ENCODE measurements at regions of chr11 and their contacts with region 1.

Region 1: DNA sequence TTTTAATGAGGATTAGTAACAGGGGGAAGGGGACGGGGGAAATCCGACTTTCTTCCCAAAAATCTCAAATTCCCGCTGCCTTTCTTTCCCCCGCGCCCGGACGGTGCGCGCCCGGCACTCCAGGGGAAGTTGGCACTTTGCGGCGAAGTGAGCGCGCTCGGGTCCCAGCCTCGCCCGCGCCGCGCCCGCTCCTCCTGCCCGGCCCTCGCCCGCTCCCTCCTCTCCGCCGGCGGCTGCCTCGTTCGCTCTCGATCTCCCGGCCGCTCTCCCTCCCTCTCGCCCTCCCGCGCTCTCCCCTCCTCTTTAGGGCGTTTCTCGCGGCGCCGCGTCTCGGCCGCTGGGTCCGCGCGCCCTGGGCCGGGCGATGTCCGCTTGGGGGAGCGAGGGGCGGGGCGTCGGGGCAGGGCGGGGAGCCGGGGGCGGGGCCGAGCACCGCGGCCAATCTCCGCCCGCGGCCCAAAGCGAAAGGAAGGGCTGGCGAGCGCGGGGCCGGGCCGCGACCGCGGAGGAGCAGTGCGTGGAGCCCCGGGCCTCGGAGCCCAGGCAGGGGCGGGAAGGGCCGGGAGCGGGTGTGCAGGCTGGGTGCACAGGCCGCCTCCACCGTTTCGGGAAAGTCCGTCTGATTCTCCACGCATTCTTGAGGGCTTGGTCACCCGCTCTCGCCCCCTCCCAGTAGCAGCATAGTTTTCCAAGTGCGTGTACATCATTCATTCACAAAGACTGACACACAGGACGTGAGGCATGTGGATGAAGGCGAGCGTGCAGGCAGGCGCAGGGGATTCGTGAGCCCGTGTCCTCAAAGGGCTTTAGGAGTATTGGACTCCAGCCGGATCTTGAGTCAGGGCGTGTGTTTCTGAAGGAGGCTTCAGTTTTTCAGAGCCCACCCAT is 65.1 kb downstream of the ETS1 start:
- DNase-seq: peak; percentile 100
- ATAC-seq: peak; percentile 90
- H3K4me3 ChIP-seq: peak overlapping the region; percentile 99
- H3K27ac ChIP-seq: peak overlapping the region; percentile 98
- H3K4me1 ChIP-seq: peaks cover 26% of the 10 kb centered on the region
- H3K27me3 ChIP-seq: no peaks in the 10 kb centered on the region
- CTCF ChIP-seq: no peak
- POLR2A ChIP-seq: peak; percentile 96
- RAD21 ChIP-seq: peak; percentile 27

Region 2: DNA sequence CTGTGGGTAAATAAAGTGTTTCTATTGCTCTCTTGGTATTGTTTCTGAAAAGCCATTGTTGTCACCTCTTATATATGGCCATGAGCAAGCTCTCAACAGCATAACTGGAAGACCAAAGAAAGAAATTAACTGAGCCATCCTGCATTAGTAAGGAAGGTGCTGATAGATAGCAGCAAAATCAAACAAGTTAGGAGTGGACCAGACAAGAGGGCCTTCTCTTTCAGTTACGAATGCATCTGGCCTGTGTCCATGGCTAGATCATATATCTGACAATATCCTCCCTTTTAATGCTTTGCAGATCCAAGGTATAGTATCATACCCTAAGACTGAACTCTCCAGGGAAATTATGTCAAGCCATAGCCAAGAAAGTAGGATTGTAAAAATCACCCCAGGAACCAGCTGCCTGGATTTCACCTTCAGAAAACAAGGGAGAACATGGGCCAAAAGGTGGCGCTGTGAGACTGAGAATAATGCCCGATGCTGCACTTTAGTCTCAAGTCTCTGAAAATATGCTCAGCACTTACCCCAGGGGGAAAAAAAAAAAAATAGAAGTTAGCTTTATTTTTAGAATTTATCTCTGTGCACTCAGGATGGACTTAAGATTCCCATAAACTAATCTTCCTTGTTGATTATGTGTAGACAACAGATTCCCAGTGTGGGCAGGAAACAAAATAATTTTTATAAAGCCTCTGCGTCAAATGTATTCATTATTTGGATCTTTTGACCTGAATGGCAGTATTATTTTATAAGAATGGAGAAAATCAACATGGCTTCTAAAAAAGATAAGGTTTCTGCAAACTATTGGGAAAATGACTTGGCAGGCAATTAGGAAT is 350.0 kb before region 1 on chr11:
- CTCF ChIA-PET with region 1: interaction called, 5 read pairs
- POLR2A ChIA-PET with region 1: no interaction called
- dilution Hi-C with region 1: no loop called
- in situ Hi-C with region 1: no loop called
- intact Hi-C with region 1: loop called (anchors 1 kb)
- DNase-seq: peak; percentile 86
- ATAC-seq: peak; percentile 87
- H3K4me3 ChIP-seq: no peak overlapping the region
- H3K27ac ChIP-seq: no peak overlapping the region
- H3K4me1 ChIP-seq: peaks cover 2% of the 10 kb centered on the region; the same call in 1 of the 2 replicates
- H3K27me3 ChIP-seq: peaks cover 7% of the 10 kb centered on the region
- CTCF ChIP-seq: peak; percentile 92
- POLR2A ChIP-seq: peak; percentile 37; the same call in 1 of the 2 replicates
- RAD21 ChIP-seq: peak; percentile 95

Region 3: GRCh38 chr11:128365044-128365443 is 157.3 kb before region 1 on chr11:
- CTCF ChIA-PET with region 1: interaction called, 3 read pairs
- POLR2A ChIA-PET with region 1: no interaction called
- dilution Hi-C with region 1: no loop called
- in situ Hi-C with region 1: no loop called
- intact Hi-C with region 1: loop called (anchors 5 kb)
- DNase-seq: peak; percentile 85
- ATAC-seq: peak; percentile 63
- H3K4me3 ChIP-seq: no peak overlapping the region
- H3K27ac ChIP-seq: no peak overlapping the region
- H3K4me1 ChIP-seq: peaks cover 11% of the 10 kb centered on the region
- H3K27me3 ChIP-seq: peaks cover 1% of the 10 kb centered on the region; the same call in 1 of the 2 replicates
- CTCF ChIP-seq: no peak
- POLR2A ChIP-seq: no peak
- RAD21 ChIP-seq: no peak

Region 4: DNA sequence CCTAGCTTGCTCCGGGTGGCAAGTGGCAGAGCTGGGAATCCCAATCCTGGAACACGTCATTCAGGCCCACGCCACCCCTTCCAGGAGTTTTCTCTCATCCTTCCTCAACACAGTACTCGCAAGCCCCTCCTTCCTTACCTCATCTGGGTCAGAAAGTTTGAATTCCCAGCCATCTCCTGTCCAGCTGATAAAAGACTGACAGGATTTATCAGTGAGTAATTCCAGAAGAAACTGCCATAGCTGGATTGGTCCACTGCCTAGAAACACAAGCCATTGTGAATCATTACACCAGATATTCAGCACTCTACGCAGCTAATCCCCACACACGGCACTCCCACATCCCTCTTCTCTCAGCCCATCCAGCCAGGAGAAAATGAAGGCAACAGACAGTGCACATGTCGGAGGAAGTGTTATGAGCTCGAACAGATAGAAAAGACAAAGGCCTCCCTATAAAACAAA is 58.9 kb before region 1 on chr11:
- CTCF ChIA-PET with region 1: interaction called, 3 read pairs
- POLR2A ChIA-PET with region 1: interaction called, 4 read pairs
- dilution Hi-C with region 1: no loop called
- in situ Hi-C with region 1: no loop called
- intact Hi-C with region 1: loop called (anchors 2 kb)
- DNase-seq: peak; percentile 99
- ATAC-seq: peak; percentile 75
- H3K4me3 ChIP-seq: no peak overlapping the region
- H3K27ac ChIP-seq: peak overlapping the region; percentile 4; the same call in 1 of the 2 replicates
- H3K4me1 ChIP-seq: peaks cover 20% of the 10 kb centered on the region
- H3K27me3 ChIP-seq: no peaks in the 10 kb centered on the region
- CTCF ChIP-seq: no peak
- POLR2A ChIP-seq: peak; percentile 67
- RAD21 ChIP-seq: no peak

Region 5: DNA sequence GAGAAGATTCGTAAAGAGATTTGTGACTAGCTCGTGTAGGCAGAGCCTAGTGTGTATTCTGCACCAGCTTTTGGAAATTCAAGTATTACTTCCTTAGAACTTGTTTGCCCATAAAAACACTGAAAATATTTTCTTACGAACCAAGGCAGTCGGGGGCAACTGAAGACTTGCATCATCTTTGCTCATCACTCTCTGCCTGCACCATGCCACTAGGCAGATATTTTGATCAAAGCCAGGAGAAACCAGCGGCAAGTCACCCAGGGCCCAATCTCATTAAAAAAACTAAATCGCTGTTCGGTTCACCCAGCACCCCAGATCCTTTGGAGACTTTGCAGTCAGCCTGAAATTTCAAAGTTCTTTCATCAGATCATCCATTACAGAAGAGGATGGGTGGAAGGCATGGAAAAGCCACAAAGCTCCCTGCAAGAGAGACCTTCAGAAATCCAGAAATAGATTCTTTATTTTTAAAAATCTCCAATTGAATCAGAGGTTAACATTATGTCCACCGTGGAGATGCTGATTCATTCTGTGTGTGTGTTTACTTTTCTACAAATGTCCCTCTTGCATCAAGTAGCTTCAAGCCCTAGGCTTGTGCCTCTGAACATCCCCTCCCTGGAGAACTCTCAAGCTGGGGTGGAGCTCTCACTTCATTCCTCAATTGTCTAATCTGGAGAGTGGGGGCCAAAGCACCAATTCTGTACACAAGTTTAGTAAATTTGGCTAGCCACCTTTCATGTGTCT is 13.4 kb before region 1 on chr11:
- CTCF ChIA-PET with region 1: interaction called, 4 read pairs
- POLR2A ChIA-PET with region 1: interaction called, 13 read pairs
- dilution Hi-C with region 1: no loop called
- in situ Hi-C with region 1: no loop called
- intact Hi-C with region 1: no loop called
- DNase-seq: peak; percentile 86
- ATAC-seq: peak; percentile 40
- H3K4me3 ChIP-seq: no peak overlapping the region
- H3K27ac ChIP-seq: peak overlapping the region; percentile 51; the same call in 1 of the 2 replicates
- H3K4me1 ChIP-seq: peaks cover 31% of the 10 kb centered on the region
- H3K27me3 ChIP-seq: no peaks in the 10 kb centered on the region
- CTCF ChIP-seq: no peak
- POLR2A ChIP-seq: 0 out of 2 replicates have a peak, but pooled peaks have one; percentile 6
- RAD21 ChIP-seq: no peak

Region 6: GRCh38 chr11:128709402-128709801 is 187.1 kb after region 1 on chr11:
- CTCF ChIA-PET with region 1: interaction called, 3 read pairs
- POLR2A ChIA-PET with region 1: no interaction called
- dilution Hi-C with region 1: no loop called
- in situ Hi-C with region 1: no loop called
- intact Hi-C with region 1: loop called (anchors 5 kb)
- DNase-seq: peak; percentile 98
- ATAC-seq: peak; percentile 72
- H3K4me3 ChIP-seq: no peak overlapping the region
- H3K27ac ChIP-seq: peak overlapping the region; percentile 23; the same call in 1 of the 2 replicates
- H3K4me1 ChIP-seq: peaks cover 20% of the 10 kb centered on the region
- H3K27me3 ChIP-seq: no peaks in the 10 kb centered on the region
- CTCF ChIP-seq: peak; percentile 33
- POLR2A ChIP-seq: no peak
- RAD21 ChIP-seq: peak; percentile 41; the same call in 1 of the 2 replicates

Measured in IMR-90 (cell line).